ENCODE measurements at regions of chr15 and their contacts with region 1.

Region 1: DNA sequence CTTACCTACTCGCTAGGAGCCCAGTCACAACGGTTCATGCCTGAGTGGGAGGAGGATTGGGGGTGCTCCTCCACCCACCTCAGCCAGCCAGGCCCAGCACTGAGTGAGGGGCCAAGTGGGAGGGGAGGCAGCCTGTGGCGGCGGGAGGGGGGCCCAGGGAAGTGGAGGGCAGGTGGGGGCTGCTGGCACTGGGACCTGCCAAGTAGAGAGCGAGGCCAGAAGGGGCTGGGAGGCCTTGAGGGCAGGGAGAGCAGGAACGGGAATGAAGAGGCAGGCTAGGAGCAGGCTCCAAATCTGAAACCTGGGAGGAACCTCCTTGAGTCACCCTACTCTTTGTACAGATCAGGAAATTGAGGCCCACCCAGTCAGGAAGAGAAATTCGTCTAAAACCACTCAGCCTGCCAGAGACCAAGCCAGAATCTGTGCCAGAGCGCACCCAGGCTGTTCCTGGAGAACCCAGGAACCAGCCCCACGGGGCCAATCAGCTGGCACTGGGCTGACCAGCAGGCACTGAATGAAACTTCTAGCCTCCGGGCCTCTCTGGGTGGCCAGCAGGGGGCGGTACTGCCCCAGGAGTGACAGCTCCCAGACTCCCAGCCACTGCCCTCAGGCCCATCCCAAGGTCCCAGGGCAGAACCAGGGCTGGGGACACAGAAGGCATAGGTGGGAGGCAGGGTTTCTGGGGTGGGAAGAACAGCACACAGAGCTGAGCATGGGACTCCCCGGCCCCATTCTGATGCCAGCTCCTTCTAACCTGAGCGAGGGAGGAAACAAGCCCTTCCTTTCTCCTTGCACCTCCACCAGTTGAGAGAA is 14.8 kb upstream of the CYP11A1 start:
- DNase-seq: peak; percentile 86
- H3K4me3 Mint-ChIP-seq: no peak overlapping the region
- H3K27ac Mint-ChIP-seq: peak overlapping the region; percentile 94
- H3K4me1 Mint-ChIP-seq: peaks cover 79% of the 10 kb centered on the region
- H3K27me3 Mint-ChIP-seq: no peaks in the 10 kb centered on the region

Region 2: DNA sequence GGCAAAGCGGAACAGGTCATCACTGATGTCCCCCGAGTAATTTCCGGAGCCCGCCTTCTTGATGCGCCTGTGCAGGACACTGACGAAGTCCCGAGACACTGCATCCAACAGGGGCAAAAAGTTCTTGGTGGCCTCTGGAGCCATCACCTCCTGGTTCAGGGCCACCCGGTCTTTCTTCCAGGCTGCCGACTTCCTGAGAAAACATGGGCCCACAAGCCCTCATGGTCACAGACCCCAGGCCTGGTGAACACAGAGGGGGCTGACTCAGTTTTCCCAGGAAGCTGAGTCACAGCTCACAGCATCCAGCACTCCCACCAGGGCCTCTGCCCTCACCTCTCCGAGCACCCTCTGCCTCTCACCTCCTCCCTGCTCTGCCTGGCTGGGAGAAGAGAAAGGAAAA is 37.2 kb before region 1 on chr15:
- CTCF ChIA-PET with region 1: no interaction called
- POLR2A ChIA-PET with region 1: no interaction called
- intact Hi-C with region 1: no loop called
- DNase-seq: no peak
- H3K4me3 Mint-ChIP-seq: no peak overlapping the region
- H3K27ac Mint-ChIP-seq: no peak overlapping the region
- H3K4me1 Mint-ChIP-seq: peaks cover 5% of the 10 kb centered on the region
- H3K27me3 Mint-ChIP-seq: no peaks in the 10 kb centered on the region

Region 3: DNA sequence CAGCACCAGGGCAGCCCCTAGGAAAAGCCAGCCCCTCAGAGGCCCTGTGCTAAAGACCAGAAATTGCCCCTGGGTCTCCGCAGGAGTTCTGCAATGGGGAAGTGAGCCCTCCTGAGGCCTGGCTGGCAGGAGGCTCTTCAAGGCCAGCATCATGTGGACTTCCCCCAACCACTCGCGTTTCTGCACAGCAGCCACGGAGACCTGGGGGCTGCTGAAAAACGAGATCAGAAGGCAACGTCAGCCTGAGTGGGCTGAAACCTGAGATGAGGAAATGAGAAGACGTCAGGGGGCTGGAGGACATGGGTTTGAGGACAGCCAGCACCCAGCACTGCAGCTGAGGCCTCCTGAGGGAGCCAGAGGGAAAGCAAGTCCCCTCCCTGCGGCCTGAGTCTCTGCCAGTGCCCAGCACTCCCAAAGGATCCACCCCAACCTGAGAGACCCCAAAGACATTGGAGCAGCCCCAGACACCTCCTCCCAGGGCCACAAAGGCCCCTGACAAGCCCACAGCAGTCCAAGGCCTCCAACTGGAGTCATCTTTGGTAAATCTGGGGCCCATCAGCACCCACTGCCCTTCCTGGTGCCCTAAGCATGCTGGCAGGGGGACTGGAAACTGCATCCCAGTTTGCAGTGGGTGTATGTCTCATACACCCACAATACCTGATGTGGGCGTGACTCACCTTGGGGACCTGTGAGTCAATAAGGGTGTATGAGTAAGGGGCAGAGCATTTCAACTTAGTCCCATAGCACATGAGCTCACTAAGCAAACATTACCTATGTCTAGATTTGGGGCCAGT is 14.4 kb after region 1 on chr15:
- CTCF ChIA-PET with region 1: interaction called, 93 read pairs
- POLR2A ChIA-PET with region 1: interaction called, 85 read pairs
- intact Hi-C with region 1: loop called (anchors 1 kb)
- DNase-seq: peak; percentile 82
- H3K4me3 Mint-ChIP-seq: peak overlapping the region; percentile 36
- H3K27ac Mint-ChIP-seq: peak overlapping the region; percentile 93
- H3K4me1 Mint-ChIP-seq: peaks cover 82% of the 10 kb centered on the region
- H3K27me3 Mint-ChIP-seq: no peaks in the 10 kb centered on the region

Region 4: DNA sequence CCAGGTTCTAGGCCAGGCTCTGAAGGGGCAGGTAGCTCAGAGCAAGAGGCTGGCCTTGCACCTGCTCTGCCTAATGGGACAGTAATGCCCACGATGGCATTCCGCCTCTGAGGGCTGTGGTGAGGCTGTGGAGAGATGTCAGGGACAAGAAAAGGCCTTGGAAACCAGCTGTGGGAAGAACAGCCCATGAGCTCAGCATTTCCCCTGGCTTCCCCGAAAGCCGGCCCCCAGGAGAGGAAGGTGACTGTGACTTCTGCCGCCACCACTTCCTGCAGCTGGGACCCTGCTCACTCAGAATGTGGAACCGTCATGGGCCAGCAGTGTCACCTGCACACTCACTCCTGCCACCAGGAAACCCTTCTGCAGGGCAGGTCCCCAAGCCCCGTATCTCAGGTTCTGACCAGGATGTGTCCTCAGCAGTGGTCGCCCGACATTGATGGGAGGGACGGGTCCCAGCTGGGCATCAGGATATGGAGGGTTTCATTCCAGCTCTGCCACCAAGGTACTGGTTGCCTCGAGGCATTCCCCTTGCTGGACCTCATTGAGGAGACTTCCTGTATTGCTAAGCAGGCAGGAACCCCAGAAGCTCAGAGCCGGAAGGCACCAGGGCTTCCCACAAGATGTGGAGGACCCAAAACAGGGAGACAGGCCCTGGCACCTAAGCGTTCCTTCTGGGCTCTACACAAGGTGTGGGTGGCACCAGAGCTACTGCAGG is 20.8 kb after region 1 on chr15:
- CTCF ChIA-PET with region 1: interaction called, 93 read pairs
- POLR2A ChIA-PET with region 1: interaction called, 85 read pairs
- intact Hi-C with region 1: loop called (anchors 1 kb)
- DNase-seq: peak; percentile 95
- H3K4me3 Mint-ChIP-seq: peak overlapping the region; percentile 28
- H3K27ac Mint-ChIP-seq: peak overlapping the region; percentile 85
- H3K4me1 Mint-ChIP-seq: peaks cover 73% of the 10 kb centered on the region
- H3K27me3 Mint-ChIP-seq: no peaks in the 10 kb centered on the region

Region 5: DNA sequence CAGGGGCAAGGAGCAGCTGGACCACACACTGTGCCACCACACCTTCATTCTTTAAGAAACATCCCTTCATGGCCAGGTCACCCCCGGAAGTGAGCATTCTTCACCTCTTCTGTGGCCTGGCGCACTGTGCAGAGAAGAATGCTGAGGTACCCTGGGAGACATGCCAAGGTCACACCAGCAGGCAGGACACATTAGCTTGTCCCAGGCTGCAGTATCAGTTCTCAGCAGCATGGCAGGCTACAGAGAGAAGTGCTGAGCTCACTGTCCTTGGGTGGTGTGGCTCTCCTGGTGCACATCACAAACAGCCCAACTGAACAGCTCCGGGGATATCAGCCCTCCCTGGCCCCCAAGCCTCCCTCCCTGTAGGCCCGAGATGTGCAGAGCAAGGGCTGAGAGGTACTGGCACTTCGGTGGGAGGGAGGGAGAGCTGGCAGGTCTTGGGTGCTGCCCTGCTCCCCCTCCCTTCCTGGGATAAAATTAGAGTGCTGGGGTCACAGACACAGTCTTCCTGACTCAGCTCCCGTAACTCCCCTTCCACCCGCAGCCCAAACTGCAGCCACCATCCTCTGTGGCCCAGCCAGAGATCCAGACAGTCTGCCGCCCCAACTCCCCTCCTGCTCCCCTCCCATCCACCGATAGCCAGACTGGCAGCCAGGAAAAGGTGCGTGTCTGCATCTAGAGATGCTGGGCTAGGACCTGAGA is 38.1 kb after region 1 on chr15:
- CTCF ChIA-PET with region 1: interaction called, 652 read pairs
- POLR2A ChIA-PET with region 1: no interaction called
- intact Hi-C with region 1: no loop called
- DNase-seq: no peak
- H3K4me3 Mint-ChIP-seq: no peak overlapping the region
- H3K27ac Mint-ChIP-seq: no peak overlapping the region
- H3K4me1 Mint-ChIP-seq: peaks cover 38% of the 10 kb centered on the region
- H3K27me3 Mint-ChIP-seq: no peaks in the 10 kb centered on the region

Region 6: GRCh38 chr15:74433592-74434262 is 51.5 kb after region 1 on chr15 and contains the start of gene SEMA7A:
- CTCF ChIA-PET with region 1: interaction called, 652 read pairs
- POLR2A ChIA-PET with region 1: interaction called, 16 read pairs
- intact Hi-C with region 1: loop called (anchors 1 kb)
- DNase-seq: peak; percentile 90
- H3K4me3 Mint-ChIP-seq: peak within 1 kb of the TSS; percentile 86
- H3K27ac Mint-ChIP-seq: peak within 1 kb of the TSS; percentile 89
- H3K4me1 Mint-ChIP-seq: peaks cover 58% of the 10 kb centered on the region
- H3K27me3 Mint-ChIP-seq: no peaks in the 10 kb centered on the region
- total RNA-seq, gene SEMA7A: 65.9 to 68.4 TPM

Region 7: GRCh38 chr15:74438721-74439316 is 56.6 kb after region 1 on chr15:
- CTCF ChIA-PET with region 1: interaction called, 652 read pairs
- POLR2A ChIA-PET with region 1: interaction called, 16 read pairs
- intact Hi-C with region 1: loop called (anchors 1 kb)
- DNase-seq: peak; percentile 87
- H3K4me3 Mint-ChIP-seq: no peak overlapping the region
- H3K27ac Mint-ChIP-seq: no peak overlapping the region
- H3K4me1 Mint-ChIP-seq: peaks cover 28% of the 10 kb centered on the region
- H3K27me3 Mint-ChIP-seq: no peaks in the 10 kb centered on the region

Region 8: GRCh38 chr15:74489518-74490338 is 107.5 kb after region 1 on chr15:
- CTCF ChIA-PET with region 1: interaction called, 20 read pairs
- POLR2A ChIA-PET with region 1: no interaction called
- intact Hi-C with region 1: no loop called
- DNase-seq: peak; percentile 80
- H3K4me3 Mint-ChIP-seq: no peak overlapping the region
- H3K27ac Mint-ChIP-seq: no peak overlapping the region
- H3K4me1 Mint-ChIP-seq: peaks cover 10% of the 10 kb centered on the region
- H3K27me3 Mint-ChIP-seq: no peaks in the 10 kb centered on the region